HEK293T (cell line): ENCODE measurements at regions of chr19 and their contacts with region 1.

Region 1: DNA sequence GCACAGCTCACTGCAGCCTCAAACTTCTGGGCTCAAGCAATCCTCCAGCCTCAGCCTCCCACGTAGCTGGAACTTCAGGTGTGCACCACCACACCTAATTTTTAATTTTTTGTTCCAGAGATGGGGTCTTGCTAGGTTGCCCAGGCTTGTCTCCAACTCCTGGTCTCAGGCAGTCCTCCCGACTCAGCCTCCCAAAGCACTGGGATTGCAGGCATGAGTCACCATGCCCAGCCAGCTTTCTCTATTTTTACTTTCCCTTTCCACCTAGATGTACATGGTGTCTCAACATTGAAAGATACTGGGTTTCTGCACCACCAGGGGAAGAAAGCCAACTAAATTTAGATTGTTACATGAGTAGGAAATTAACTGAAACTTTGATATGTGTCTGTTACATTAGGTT is 13.8 kb upstream of the ZNF846 start:
- DNase-seq: no peak

Region 2: DNA sequence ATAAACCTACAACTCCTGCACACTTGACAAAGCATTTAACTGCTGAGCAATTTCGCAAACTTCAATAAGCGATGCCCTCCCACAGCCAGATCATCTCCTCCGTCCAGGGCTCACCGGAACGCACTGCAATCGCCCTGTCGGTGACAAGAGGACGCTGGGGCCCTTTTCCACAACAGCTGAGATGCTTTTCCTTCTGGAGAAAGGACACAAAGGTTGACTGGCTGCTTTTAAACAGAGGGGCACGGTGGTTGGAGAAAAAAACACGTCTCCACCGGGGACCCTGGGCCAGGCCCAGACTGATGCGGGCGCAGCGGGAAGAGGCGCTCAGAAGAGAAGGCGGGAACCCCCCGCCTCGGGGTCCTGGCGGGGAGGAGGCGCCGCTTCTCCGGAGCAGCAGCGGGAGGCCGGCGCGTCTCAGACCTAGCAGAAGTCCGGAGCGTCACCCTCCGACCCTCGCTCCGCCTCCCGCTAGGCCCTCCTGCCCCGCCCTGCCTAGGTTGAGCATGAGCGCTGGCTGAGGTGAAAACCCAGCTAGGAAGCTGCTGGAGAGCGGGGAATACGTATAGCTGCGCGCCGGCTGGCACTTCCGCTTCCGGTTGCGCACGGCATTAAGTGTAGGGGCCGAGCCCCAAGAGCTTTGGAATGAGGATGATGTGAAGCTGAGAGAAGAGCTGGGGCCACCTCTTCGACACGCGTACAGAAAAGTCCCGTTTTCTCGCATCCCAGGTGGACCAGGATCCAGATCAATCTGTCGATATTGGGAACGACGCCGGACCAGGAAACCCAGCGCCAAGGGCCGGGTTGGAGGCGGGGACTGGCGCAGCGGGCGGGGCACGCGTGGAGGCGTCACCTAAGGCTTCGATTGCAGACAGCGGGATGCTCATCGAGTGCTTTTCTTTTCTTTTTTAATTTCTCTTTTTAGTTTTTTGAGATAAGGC is 13.9 kb before region 1 on chr19 and contains the start of gene ZNF846:
- CTCF ChIA-PET with region 1: no interaction called
- POLR2A ChIA-PET with region 1: interaction called, 16 read pairs
- DNase-seq: peak; percentile 93